ENCODE measurements at regions of chr12 and their contacts with region 1.

Region 1: DNA sequence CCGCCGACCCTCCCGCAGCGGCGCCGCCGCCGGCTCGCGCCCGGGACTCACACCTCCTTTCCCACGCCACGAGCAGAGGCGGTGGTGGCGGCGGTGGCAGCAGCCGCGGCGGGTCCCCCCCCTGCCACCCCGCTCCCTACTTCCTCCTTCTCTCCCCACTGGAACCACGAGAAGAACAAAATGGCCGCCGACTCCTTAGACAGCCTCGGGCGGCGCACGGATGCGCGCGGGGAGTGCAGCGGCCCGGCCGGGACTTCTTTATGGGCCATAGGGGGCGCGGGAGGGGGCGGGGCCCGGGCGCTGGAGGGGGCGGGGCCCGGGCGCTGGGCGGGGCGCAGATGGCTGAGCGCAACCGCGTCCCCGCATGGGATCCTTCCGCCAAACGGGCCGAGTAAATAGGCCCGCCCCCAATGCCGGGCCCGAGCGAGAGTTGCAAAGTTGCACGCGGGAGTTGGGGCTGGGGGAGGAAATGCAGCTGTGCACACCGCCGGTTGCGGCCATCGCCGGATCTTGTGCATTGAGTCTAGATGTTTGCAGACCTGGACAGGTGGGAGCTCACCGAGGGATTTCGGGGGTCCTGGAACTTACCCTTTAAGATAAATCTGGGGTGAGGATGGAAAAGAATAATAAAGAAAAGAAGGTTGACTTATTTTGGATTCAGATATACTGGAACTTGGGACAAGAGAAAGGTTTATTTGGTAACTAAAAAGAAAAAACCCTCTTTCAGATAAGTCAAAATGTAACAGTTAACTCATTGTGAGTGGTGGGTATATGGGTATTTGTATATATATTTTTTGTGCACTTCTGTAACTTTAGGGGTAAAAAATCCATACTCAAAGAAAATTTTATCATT is at the start of gene PPP1CC:
- DNase-seq: peak; percentile 95
- ATAC-seq: peak; percentile 96 to 98
- total RNA-seq, gene PPP1CC: 137 to 174 TPM

Region 2: GRCh38 chr12:110371408-110372055 is 371.4 kb before region 1 on chr12:
- intact Hi-C with region 1: no loop called
- DNase-seq: no peak
- ATAC-seq: peak in 1 of 2 donors; percentile 17

Region 3: DNA sequence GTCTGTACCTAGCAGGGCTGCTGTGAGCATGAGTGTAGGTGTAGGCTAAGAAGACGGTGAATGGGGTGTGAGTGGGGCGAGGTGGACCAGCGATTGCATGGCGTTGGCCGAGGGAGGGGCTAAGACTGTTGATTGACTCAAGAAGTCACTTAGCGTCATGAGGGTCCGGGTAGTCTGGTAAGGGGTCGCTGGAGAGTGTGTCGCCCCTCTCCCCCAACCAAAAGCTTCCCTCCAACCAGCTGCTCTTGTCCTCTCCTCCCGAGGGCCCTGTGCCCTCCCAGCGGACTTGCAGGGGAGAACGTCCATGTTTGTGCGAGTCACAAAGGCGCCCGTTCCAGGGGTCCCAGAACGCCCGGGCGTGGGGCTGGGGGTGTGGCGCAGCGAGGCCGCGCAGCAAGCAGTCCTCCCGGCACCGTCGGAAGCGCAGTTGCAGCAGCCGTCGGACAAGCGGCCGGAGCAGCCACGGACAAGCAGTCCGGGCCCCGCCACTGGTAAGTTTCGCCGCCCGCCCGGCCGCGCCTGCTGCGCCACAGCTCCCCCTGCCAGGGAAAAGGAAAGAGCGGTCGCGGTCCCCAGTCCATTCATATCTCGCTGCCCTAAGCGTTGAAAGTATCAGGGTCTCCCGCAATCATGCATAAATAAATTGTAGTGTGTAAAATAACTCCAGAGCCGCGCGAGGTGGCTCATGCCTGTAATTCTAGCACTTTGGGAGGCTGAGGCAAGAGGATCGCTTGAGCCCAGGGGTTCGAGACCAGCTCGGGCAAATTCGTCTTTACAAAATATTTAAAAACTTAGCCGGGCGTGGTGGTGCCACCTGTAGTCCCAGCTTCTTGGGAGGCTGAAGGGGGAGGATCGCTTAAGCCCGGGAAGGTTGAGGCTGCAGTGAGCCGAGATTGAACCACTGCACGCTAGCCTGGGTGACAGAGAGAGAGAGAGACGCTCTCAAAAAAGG is 103.9 kb after region 1 on chr12 and contains the start of gene CCDC63:
- intact Hi-C with region 1: loop called in 1 of 2 experiments (anchors 10 kb)
- DNase-seq: peak; percentile 61
- ATAC-seq: peak; percentile 49 to 55
- total RNA-seq, gene CCDC63: not detected

Measured in left cardiac atrium (tissue), 4 donors.